Activated CD4-positive, alpha-beta T cell treated with anti-CD3 and anti-CD28 coated beads, Interleukin-2, amount 10 ng/mL, durations not matched to agents 7 days and 5 days (primary cell): ENCODE measurements at regions of chr1 and their contacts with region 1.

Region 1: DNA sequence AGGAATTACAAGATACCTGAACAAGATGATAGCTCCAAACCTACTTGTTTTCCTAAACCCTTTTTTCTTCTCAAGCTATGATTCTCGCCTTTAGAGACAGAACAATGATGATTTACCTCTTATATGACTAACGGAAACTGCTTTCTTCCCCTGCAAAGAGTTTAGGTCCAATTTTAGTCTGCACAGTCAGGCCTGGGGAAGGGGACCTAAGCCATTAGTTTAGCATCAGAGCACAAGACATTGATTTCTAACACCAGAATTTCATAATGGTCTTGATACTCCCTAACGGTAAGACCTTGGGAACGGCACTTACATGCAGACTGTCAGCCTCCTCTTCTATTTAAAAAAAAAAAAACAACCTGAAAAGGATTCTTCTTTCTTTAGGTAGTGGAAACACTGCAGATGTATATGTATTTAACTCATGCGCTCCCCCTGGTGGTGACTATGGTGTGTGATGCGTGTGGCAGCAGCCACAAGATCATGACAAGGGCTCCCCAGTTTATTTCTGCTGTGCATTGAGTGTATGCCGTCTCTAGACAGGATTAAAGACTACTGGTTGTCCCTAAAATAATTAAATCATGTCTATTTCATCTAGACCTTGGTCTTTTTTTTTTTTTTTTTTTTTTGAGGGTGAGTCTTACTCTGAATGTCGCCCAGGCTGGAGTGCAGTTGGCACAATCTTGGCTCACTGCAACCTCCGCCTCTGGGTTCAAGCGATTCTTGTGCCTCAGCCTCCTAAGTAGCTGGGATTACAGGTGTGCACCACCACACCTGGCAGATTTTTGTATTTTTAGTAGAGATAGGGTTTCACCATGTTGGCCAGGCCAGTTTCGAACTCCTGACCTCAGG is 37.3 kb upstream of the TMEM222 start:
- DNase-seq: peak; percentile 94
- H3K4me3 Mint-ChIP-seq: no peak overlapping the region
- H3K27ac Mint-ChIP-seq: no peak overlapping the region
- H3K4me1 Mint-ChIP-seq: no peaks in the 10 kb centered on the region
- H3K27me3 Mint-ChIP-seq: no peaks in the 10 kb centered on the region

Region 2: GRCh38 chr1:27102707-27103491 is 181.8 kb before region 1 on chr1:
- CTCF ChIA-PET with region 1: interaction called, 13 read pairs
- POLR2A ChIA-PET with region 1: interaction called, 5 read pairs
- DNase-seq: peak; percentile 80
- H3K4me3 Mint-ChIP-seq: no peak overlapping the region
- H3K27ac Mint-ChIP-seq: no peak overlapping the region
- H3K4me1 Mint-ChIP-seq: peaks cover 10% of the 10 kb centered on the region
- H3K27me3 Mint-ChIP-seq: no peaks in the 10 kb centered on the region